ENCODE measurements at regions of chr7 and their contacts with region 1.

Region 1: DNA sequence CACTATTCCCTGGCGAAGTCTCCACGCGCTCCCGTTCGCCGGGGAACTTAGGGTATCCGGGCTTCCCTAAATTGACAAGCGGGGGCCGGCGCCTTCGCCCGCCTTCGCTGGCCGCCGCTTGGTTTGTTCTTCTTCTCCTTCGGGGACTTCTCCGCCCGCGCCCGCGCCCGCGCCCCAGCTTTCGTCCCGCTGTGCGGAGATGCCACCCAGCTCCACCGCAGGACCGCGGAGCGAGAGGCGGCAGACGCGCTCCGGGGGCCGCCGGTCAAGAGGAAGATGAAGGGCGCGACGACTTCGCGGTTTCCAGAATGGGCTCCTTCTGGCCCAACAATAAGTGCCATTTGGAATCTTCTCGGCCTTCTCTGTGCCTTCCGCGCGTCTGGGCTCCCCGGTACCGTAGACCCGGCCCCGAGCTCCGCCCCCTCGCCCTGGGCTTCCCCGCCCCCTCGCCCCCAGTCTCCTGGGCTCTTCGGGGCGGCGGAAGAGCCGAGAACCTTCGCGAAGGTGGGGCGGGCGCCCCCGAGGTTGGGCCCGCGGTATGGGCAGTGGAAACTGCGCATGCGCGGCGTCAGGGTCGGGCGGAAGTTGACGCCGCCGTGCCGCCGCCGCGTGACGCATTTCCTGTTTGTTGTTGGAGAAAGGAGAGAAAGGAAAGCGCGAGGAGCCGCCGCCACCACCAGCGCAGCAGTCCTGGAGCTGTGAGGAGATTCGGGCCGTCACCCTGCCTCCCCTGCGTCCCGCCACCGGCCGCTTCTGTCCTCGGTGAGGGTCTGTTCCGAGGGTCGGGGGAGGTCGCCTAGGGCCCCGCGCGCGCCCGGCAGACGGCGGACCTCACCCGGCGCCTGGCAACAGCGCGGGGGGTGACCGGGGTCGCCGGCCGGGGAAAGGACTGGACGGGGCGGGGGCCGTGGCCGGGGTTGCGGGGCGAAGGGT is at the start of gene DNAJB6:
- DNase-seq: peak; percentile 95
- ATAC-seq: peak; percentile 92
- total RNA-seq, gene DNAJB6: 195 TPM

Region 2: DNA sequence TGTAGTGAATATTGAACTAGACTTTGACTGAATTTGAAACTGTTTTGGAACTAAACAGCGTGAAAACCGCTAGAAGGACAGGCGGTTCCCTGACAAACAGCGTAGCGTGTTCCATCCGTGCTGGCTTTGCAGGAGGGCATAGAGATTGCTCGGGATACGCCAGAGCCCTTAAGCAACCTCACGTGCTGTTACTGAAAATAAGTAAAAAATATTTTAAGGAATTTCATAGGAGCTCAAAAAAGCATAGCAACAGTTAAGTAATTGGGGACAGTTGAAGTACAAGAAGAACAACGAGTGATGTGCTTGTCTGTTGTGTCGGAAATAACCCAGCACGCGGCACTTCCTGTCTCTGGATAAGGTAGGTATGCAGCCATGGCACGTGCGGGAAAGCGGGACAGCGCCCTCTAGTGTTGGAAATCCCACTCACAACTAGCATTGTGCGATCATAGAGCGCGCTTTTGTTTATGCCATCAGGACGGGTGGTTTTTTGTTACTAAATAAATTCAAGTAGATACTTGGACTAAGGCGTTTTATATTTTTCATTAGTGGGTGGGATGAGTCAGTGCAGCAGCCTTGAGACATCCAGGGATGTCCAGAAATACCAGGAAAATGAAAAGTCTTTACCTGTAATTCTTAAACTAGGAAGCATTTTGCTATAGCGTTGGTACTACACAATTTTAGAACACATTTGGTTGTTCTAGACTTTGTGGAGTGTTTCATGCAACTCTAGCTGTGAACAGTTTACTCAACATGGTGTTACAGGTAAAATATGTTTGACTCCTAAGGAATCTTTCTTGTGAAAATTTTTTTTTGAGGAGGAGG is 50.5 kb after region 1 on chr7:
- intact Hi-C with region 1: loop called (anchors 2 kb)
- DNase-seq: peak; percentile 94
- ATAC-seq: peak; percentile 88

Region 3: GRCh38 chr7:157464111-157464970 is 127.7 kb after region 1 on chr7:
- intact Hi-C with region 1: no loop called
- DNase-seq: no peak
- ATAC-seq: no peak

Region 4: DNA sequence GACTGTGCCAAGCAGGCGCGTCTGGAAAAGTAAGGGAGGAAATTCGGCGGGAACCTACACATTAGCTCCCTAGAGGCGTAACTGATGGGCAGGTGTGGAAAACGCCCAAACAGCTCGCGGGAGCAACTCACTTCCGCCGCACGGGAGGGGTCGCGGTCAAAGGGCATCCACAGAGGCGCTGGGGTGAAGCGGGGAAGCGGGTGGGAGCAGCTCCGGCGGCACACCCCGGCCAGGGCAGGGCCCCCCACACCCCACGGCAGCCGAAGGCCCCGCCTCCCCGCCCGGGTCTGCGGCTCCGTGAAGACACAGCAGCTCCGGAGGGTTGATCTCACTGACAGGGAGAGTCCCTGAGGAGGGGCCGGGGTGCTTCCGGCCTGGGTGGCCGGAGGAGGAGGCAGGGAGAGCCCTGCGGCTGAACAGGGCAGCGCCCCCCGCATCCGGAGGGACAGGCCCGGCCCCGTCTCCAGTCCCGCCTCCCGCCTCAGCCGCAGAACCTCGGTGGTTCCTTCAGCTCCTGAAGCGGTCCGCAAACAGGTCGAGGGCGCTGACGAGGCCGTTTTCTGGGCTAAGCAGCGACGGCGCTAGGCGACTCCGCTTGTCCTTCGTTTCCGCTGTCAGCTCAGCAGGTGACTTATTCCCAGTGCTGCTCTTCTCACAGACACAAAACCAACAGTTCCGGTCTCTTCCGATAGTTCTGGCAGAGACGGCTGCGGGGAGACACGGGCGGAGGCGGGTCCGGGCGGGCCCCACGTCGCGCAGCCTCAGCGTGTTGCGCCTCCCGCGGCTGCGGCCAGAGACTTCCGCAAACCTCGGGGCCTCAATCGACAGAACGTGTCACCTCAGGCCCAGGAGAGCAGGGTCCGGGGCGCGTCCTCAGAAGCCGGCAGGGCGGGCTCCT is 276.3 kb after region 1 on chr7:
- intact Hi-C with region 1: no loop called
- DNase-seq: peak; percentile 81
- ATAC-seq: peak; percentile 49

Measured in Right ventricle myocardium inferior (tissue), 1 donor.